ENCODE measurements at regions of chr12 and their contacts with region 1.

Region 1: GRCh38 chr12:49623142-49623904 is at the start of gene PRPF40B:
- DNase-seq: peak; percentile 92 to 95
- ATAC-seq: peak; percentile 91 to 94 (median 92)
- H3K4me3 ChIP-seq: peak within 1 kb of the TSS; percentile 69
- H3K27ac ChIP-seq: peak within 1 kb of the TSS; percentile 71
- H3K4me1 ChIP-seq: peaks cover 8% of the 10 kb centered on the region
- H3K27me3 ChIP-seq: no peaks in the 10 kb centered on the region
- CTCF ChIP-seq: peak; percentile 36
- total RNA-seq, gene PRPF40B: 24.5 to 26.1 (median 25.3) TPM

Region 2: DNA sequence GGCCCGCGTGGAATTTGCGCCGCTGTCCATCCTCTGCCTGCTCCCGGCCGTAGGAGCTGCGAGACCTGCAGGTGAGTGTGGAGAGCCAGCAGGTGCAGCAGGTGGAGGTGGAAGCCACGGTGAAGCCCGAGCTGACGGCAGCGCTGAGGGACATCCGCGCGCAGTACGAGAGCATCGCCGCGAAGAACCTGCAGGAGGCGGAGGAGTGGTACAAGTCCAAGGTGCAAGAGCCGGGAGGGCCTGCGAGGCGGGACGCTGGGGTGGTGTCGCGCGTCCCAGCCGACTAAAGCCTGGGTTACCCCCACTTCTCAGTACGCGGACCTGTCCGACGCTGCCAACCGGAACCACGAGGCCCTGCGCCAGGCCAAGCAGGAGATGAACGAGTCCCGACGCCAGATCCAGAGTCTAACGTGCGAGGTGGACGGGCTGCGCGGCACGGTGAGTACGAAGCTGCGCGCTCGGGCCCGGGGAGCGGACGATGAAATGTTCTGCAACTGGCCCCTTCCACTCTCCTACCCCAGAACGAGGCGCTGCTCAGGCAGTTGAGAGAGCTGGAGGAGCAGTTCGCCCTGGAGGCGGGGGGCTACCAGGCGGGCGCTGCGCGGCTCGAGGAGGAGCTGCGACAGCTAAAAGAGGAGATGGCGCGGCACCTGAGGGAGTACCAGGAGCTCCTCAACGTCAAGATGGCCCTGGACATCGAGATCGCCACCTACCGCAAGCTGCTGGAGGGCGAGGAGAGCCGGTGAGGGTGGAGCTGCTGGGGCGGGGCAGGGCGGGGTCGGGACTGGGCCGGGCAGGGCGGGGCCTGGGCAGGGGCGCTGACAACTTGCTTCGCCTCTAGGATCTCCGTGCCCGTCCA is 326.3 kb before region 1 on chr12:
- intact Hi-C with region 1: no loop called
- DNase-seq: peak in 1 of 2 donors; percentile 56
- ATAC-seq: peak in 3 of 4 donors; percentile 50 to 68 (median 62)
- H3K4me3 ChIP-seq: peak overlapping the region; percentile 41
- H3K27ac ChIP-seq: no peak overlapping the region
- H3K4me1 ChIP-seq: peaks cover 6% of the 10 kb centered on the region
- H3K27me3 ChIP-seq: peaks cover 0 to 64% (median 34%) of the 10 kb centered on the region in 3 donors
- CTCF ChIP-seq: no peak

Region 3: DNA sequence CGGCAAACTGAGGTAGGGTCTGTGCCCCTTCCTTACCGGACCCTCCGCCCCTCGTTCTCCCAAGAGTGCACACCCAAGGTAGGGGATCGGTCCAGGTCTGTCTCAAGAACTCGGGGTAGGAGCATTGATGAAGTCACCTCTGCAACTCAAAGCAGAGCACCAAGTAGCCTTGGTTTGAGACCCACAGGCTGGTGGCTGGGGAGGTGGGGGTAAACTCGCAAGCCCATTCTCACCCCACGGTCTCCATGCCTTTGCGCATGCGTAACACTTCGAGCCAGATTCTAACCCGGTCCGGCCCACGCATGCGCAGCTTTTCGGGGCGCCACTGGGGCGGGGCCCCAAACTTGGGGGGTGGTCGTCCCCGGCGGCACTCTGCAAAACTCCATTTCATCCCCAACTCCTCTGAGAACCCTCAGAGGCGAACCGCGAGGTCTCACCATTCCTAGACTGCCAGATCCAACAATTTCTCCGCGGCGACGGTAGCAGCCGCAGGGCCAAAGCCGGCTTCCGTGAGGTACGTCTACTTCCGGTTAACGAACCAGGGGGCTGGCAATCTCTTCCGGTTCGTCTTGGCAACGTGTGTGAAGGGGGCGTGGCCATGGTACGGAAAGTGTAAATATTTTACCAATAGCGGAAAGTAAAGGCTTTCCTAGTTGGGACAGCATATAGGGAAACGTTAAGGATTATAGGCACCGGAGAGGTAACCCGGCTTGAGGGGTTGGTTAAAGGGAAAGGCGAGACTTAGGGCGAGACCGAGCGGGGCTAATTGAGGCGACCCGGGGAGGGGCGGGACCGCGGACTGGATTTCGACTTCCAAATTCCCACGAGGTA is 55.5 kb before region 1 on chr12 and contains the start of gene MCRS1:
- intact Hi-C with region 1: loop called in 1 of 2 experiments (anchors 5 kb)
- DNase-seq: peak; percentile 86 to 91
- ATAC-seq: peak; percentile 78 to 91 (median 82)
- H3K4me3 ChIP-seq: peak within 1 kb of the TSS; percentile 99
- H3K27ac ChIP-seq: peak within 1 kb of the TSS; percentile 97
- H3K4me1 ChIP-seq: peaks cover 42% of the 10 kb centered on the region
- H3K27me3 ChIP-seq: no peaks in the 10 kb centered on the region
- CTCF ChIP-seq: no peak
- total RNA-seq, gene MCRS1: 39.1 to 82.3 (median 55.1) TPM

Region 4: DNA sequence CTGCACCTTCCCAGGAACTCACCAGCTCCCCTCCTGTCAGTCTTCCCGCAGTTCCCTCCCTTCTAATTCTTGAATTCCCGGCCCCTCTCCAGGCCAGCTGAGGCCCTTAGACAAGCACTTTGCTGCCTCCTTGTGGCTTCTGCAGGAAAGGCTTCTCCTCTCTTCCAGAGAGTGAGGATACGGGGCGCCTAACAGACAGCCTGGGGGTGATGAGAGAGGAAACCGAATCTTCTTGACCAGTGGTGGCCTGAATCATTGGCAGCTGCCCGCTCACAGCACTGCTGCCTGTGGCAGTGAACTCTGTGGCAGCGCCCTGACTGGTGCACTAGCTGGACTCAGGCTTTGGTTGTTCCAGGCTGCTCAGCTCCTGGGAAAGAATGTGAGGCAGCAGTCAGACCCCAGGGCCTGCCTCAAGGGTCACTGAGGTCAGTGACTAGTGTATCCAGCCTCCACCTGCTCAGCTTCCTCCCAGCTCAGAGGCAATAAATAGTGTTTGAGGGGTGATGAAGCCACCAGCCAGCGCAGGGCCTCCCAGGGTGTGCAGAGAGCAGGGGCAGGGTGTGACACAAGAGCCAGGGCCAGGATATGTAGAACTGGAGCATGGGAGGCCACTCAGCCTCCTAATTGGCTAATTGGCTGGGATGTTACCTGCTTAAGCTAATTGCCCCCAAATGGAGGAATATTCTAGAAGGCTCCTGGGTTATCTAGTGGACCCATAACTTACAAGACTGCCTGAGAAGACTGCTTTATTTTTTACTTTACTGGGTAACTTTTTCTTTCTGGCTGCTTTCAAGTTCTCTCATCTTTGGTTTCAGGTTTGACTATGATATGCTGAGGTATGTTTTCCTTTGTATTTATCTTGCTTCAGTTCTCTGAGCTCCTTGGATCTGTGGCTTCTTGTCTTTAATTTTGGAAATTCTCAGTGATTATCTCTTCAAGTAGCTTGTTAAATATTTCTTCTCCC is 42.5 kb before region 1 on chr12:
- intact Hi-C with region 1: no loop called
- DNase-seq: peak; percentile 73 to 86
- ATAC-seq: peak; percentile 82 to 97 (median 92)
- H3K4me3 ChIP-seq: no peak overlapping the region
- H3K27ac ChIP-seq: peak overlapping the region; percentile 21
- H3K4me1 ChIP-seq: peaks cover 11% of the 10 kb centered on the region
- H3K27me3 ChIP-seq: no peaks in the 10 kb centered on the region
- CTCF ChIP-seq: peak; percentile 76

Region 5: DNA sequence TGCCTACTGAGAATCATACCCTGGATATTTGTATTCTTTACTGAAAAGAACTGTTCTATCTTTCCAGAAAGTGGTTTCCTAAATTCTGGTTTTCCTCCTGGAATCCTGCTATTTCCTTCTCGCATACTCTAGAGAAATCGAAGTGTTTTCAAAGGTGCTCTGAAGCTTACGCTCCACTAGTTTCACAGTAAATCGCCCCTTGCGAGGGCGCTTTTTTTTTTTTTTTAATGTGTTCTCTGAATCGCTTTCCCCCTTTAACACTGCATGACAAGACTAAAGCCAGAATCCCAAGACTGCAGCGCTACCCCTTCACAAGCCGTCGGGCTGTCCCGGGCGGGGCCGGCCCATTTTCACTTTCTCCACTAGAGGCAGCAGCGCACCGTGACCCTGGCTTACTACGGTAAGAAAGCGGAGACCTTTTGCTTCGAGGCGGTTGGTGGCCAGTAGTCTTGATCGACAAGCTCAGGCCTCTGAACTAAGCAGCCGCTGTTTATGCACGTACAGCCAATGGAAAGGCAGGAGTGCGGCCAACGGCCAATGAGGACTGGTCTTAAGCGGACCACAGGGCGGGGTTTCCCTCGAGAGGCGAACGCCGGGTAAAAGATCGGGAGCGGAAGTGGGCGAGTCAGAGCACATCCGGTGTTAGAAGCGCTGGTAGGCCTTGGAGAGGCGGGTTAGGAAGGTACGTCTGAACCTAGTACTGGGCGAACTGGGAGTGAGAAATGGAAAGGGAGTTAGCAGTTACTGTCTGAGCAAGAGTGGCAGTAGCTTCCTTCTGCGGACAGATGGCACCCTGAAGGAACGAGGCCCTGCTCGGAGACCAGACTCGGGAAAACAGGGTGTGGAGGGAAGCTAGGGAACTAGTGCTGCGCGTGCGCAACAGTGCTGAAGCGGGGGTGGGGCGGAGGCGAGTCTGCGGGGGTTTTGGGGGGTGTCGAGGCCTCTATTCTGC is 117.9 kb after region 1 on chr12 and contains the start of gene TMBIM6:
- intact Hi-C with region 1: no loop called
- DNase-seq: peak; percentile 100
- ATAC-seq: peak; percentile 94 to 98 (median 97)
- H3K4me3 ChIP-seq: peak within 1 kb of the TSS; percentile 92
- H3K27ac ChIP-seq: peak within 1 kb of the TSS; percentile 99
- H3K4me1 ChIP-seq: peaks cover 34% of the 10 kb centered on the region
- H3K27me3 ChIP-seq: no peaks in the 10 kb centered on the region
- CTCF ChIP-seq: peak; percentile 93
- total RNA-seq, gene TMBIM6: 171 to 256 (median 241) TPM

Region 6: GRCh38 chr12:49842519-49843352 is 219.4 kb after region 1 on chr12 and contains the start of gene BCDIN3D:
- intact Hi-C with region 1: loop called in 1 of 2 experiments (anchors 10 kb)
- DNase-seq: peak; percentile 93 to 96
- ATAC-seq: peak; percentile 96 to 99 (median 98)
- H3K4me3 ChIP-seq: peak within 1 kb of the TSS; percentile 84
- H3K27ac ChIP-seq: peak within 1 kb of the TSS; percentile 96
- H3K4me1 ChIP-seq: peaks cover 17% of the 10 kb centered on the region
- H3K27me3 ChIP-seq: peaks cover 0 to 7% (median 3%) of the 10 kb centered on the region in 3 donors
- CTCF ChIP-seq: no peak
- total RNA-seq, gene BCDIN3D: 1.6 to 3.5 (median 3.3) TPM

Measured in psoas muscle (tissue), 8 donors.